GM12878 (cell line): ENCODE measurements at regions of chr1 and their contacts with region 1.

Region 1: GRCh38 chr1:75745276-75745675 is 20.8 kb downstream of the ACADM start:
- DNase-seq: no peak
- ATAC-seq: peak; percentile 89
- H3K4me3 ChIP-seq: peak overlapping the region; percentile 47; the same call in 1 of the 2 replicates
- H3K27ac ChIP-seq: peak overlapping the region; percentile 34; the same call in 1 of the 2 replicates
- H3K4me1 ChIP-seq: peaks cover 8% of the 10 kb centered on the region
- H3K27me3 ChIP-seq: no peaks in the 10 kb centered on the region
- CTCF ChIP-seq: no peak
- EP300 ChIP-seq: no peak
- POLR2A ChIP-seq: no peak
- RAD21 ChIP-seq: no peak

Region 2: GRCh38 chr1:75724472-75725022 is 20.7 kb before region 1 on chr1 and contains the start of gene ACADM:
- CTCF ChIA-PET with region 1: interaction called, 4 read pairs
- POLR2A ChIA-PET with region 1: no interaction called
- RAD21 ChIA-PET with region 1: interaction called, 3 read pairs
- SMC1A ChIA-PET with region 1: interaction called, 10 read pairs
- in situ Hi-C with region 1: no loop called
- intact Hi-C with region 1: no loop called
- DNase-seq: peak; percentile 53
- ATAC-seq: peak; percentile 91
- H3K4me3 ChIP-seq: peak within 1 kb of the TSS; percentile 70
- H3K27ac ChIP-seq: peak within 1 kb of the TSS; percentile 83
- H3K4me1 ChIP-seq: 0 out of 2 replicates have a peak, but pooled peaks cover 2% of the 10 kb centered on the region
- H3K27me3 ChIP-seq: no peaks in the 10 kb centered on the region
- CTCF ChIP-seq: no peak
- EP300 ChIP-seq: no peak
- POLR2A ChIP-seq: peak; percentile 99
- RAD21 ChIP-seq: no peak
- polyA plus RNA-seq, gene ACADM: 178 to 191 TPM

Region 3: GRCh38 chr1:75730432-75730831 is 14.8 kb before region 1 on chr1:
- CTCF ChIA-PET with region 1: interaction called, 3 read pairs
- POLR2A ChIA-PET with region 1: no interaction called
- RAD21 ChIA-PET with region 1: interaction called, 3 read pairs
- SMC1A ChIA-PET with region 1: interaction called, 10 read pairs
- in situ Hi-C with region 1: no loop called
- intact Hi-C with region 1: no loop called
- DNase-seq: no peak
- ATAC-seq: no peak
- H3K4me3 ChIP-seq: no peak overlapping the region
- H3K27ac ChIP-seq: no peak overlapping the region; the same call in 1 of the 2 replicates
- H3K4me1 ChIP-seq: 0 out of 2 replicates have a peak, but pooled peaks cover 2% of the 10 kb centered on the region
- H3K27me3 ChIP-seq: no peaks in the 10 kb centered on the region
- CTCF ChIP-seq: no peak
- EP300 ChIP-seq: no peak
- POLR2A ChIP-seq: no peak
- RAD21 ChIP-seq: no peak

Region 4: GRCh38 chr1:75785983-75786853 is 40.9 kb after region 1 on chr1 and contains the start of gene RABGGTB:
- CTCF ChIA-PET with region 1: no interaction called
- POLR2A ChIA-PET with region 1: no interaction called
- RAD21 ChIA-PET with region 1: no interaction called
- SMC1A ChIA-PET with region 1: interaction called, 12 read pairs
- in situ Hi-C with region 1: no loop called
- intact Hi-C with region 1: no loop called
- DNase-seq: peak; percentile 92
- ATAC-seq: peak; percentile 80
- H3K4me3 ChIP-seq: peak within 1 kb of the TSS; percentile 80
- H3K27ac ChIP-seq: peak within 1 kb of the TSS; percentile 98
- H3K4me1 ChIP-seq: peaks cover 2% of the 10 kb centered on the region; the same call in 1 of the 2 replicates
- H3K27me3 ChIP-seq: no peaks in the 10 kb centered on the region
- CTCF ChIP-seq: no peak
- EP300 ChIP-seq: no peak
- POLR2A ChIP-seq: peak; percentile 100
- RAD21 ChIP-seq: no peak
- polyA plus RNA-seq, gene RABGGTB: 135 to 153 TPM